A549 (cell line): ENCODE measurements at regions of chr15 and their contacts with region 1.

Region 1: GRCh38 chr15:61834076-61834697 is 226.1 kb downstream of the VPS13C start:
- DNase-seq: peak; percentile 67 to 82
- ATAC-seq: peak; percentile 72 to 88
- H3K4me3 ChIP-seq: no peak overlapping the region
- H3K27ac ChIP-seq: no peak overlapping the region
- H3K4me1 ChIP-seq: peaks cover 7% of the 10 kb centered on the region; the same call in 1 of the 3 replicates
- CTCF ChIP-seq: peak; percentile 89
- EP300 ChIP-seq: no peak
- POLR2A ChIP-seq: no peak
- RAD21 ChIP-seq: peak; percentile 84 to 88

Region 2: DNA sequence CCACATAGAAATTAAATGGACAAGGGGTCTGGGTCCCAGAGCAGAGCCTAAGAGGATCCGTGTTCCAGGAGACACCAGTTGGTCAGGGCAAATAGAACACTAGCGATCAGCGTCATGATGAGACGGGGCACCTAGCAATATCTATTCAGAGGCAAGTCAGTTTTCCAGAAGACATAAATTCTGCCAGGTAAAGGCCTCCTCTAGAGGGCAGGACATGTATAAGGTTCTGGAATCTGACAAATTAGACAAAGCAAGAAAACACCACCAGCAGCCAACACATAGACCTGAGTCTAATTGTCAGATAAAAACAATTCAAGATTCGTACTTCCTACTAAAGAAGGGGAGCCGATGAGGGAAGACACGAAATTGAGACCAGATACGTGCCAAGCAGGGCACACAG is 671.0 kb before region 1 on chr15:
- CTCF ChIA-PET with region 1: interaction called, 27 read pairs
- POLR2A ChIA-PET with region 1: no interaction called
- DNase-seq: no peak
- ATAC-seq: no peak
- H3K4me3 ChIP-seq: no peak overlapping the region
- H3K27ac ChIP-seq: no peak overlapping the region
- H3K4me1 ChIP-seq: no peaks in the 10 kb centered on the region
- CTCF ChIP-seq: no peak
- EP300 ChIP-seq: no peak
- POLR2A ChIP-seq: no peak
- RAD21 ChIP-seq: no peak

Region 3: GRCh38 chr15:61195116-61196002 is 638.8 kb before region 1 on chr15:
- CTCF ChIA-PET with region 1: interaction called, 15 read pairs
- POLR2A ChIA-PET with region 1: no interaction called
- DNase-seq: peak; percentile 37 to 71
- ATAC-seq: peak; percentile 77 to 87
- H3K4me3 ChIP-seq: no peak overlapping the region
- H3K27ac ChIP-seq: no peak overlapping the region
- H3K4me1 ChIP-seq: no peaks in the 10 kb centered on the region
- CTCF ChIP-seq: peak; percentile 41; the same call in 2 of the 3 replicates
- EP300 ChIP-seq: no peak
- POLR2A ChIP-seq: no peak
- RAD21 ChIP-seq: peak; percentile 35 to 49

Region 4: GRCh38 chr15:61655881-61656280 is 178.3 kb before region 1 on chr15:
- CTCF ChIA-PET with region 1: no interaction called
- POLR2A ChIA-PET with region 1: no interaction called
- DNase-seq: no peak
- ATAC-seq: no peak
- H3K4me3 ChIP-seq: no peak overlapping the region
- H3K27ac ChIP-seq: no peak overlapping the region
- H3K4me1 ChIP-seq: no peaks in the 10 kb centered on the region
- CTCF ChIP-seq: no peak
- EP300 ChIP-seq: no peak
- POLR2A ChIP-seq: no peak
- RAD21 ChIP-seq: no peak

Region 5: GRCh38 chr15:61819386-61819785 is 14.8 kb before region 1 on chr15:
- CTCF ChIA-PET with region 1: interaction called, 33 read pairs
- POLR2A ChIA-PET with region 1: no interaction called
- DNase-seq: no peak
- ATAC-seq: no peak
- H3K4me3 ChIP-seq: no peak overlapping the region
- H3K27ac ChIP-seq: no peak overlapping the region
- H3K4me1 ChIP-seq: no peaks in the 10 kb centered on the region
- CTCF ChIP-seq: no peak
- EP300 ChIP-seq: no peak
- POLR2A ChIP-seq: no peak
- RAD21 ChIP-seq: no peak

Region 6: GRCh38 chr15:61910839-61911369 is 76.7 kb after region 1 on chr15:
- CTCF ChIA-PET with region 1: no interaction called
- POLR2A ChIA-PET with region 1: no interaction called
- DNase-seq: no peak
- ATAC-seq: no peak
- H3K4me3 ChIP-seq: no peak overlapping the region
- H3K27ac ChIP-seq: no peak overlapping the region
- H3K4me1 ChIP-seq: peaks cover 8% of the 10 kb centered on the region; the same call in 2 of the 3 replicates
- CTCF ChIP-seq: no peak
- EP300 ChIP-seq: no peak
- POLR2A ChIP-seq: no peak
- RAD21 ChIP-seq: no peak